Heart left ventricle (tissue), 16 donors: ENCODE measurements at regions of chr15 and their contacts with region 1.

Region 1: DNA sequence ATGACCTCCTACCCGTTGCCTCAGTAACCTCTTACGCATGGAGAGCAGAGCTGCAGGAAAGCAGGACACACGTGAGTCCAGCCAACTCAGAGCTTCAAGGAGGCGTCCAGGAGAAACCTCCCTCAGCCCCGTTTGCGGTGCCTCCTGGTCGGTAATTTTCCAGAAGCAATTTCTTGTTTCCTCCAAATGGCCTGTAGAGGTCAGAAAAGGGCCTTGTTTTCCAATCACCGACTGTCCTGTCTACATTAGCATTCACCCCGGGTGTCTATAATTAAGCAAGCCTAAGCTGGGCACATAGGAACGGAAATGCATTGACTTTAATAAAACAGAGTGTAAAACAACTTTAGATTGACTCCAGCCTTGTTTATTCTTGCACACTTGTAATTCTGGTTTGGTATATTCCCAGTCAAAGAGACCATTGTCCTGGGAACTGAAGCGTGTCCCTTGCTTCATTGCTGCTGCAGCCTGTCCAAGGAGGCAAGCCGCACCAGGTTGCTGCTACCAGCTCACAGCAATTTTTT is 836.2 kb downstream of the AGBL1 start:
- DNase-seq: peak in 2 of 5 donors; percentile 21 to 33
- ATAC-seq: peak; percentile 66 to 81 (median 72)
- H3K4me3 ChIP-seq: no peak overlapping the region
- H3K27ac ChIP-seq: peak overlapping the region in 3 of 12 donors; percentile 68 to 78 (median 69)
- H3K4me1 ChIP-seq: peaks cover 0 to 34% (median 13%) of the 10 kb centered on the region in 12 donors
- H3K27me3 ChIP-seq: no peaks in the 10 kb centered on the region
- CTCF ChIP-seq: peak; percentile 17 to 68 (median 52)
- POLR2A ChIP-seq: no peak

Region 2: GRCh38 chr15:87604857-87605446 is 689.1 kb after region 1 on chr15:
- intact Hi-C with region 1: loop called in 3 of 10 experiments (anchors 5 to 10 kb)
- DNase-seq: no peak
- ATAC-seq: no peak
- H3K4me3 ChIP-seq: no peak overlapping the region
- H3K27ac ChIP-seq: no peak overlapping the region
- H3K4me1 ChIP-seq: peaks cover 0 to 10% (median 1%) of the 10 kb centered on the region in 12 donors
- H3K27me3 ChIP-seq: no peaks in the 10 kb centered on the region
- CTCF ChIP-seq: peak; percentile 20 to 57 (median 42)
- POLR2A ChIP-seq: no peak

Region 3: DNA sequence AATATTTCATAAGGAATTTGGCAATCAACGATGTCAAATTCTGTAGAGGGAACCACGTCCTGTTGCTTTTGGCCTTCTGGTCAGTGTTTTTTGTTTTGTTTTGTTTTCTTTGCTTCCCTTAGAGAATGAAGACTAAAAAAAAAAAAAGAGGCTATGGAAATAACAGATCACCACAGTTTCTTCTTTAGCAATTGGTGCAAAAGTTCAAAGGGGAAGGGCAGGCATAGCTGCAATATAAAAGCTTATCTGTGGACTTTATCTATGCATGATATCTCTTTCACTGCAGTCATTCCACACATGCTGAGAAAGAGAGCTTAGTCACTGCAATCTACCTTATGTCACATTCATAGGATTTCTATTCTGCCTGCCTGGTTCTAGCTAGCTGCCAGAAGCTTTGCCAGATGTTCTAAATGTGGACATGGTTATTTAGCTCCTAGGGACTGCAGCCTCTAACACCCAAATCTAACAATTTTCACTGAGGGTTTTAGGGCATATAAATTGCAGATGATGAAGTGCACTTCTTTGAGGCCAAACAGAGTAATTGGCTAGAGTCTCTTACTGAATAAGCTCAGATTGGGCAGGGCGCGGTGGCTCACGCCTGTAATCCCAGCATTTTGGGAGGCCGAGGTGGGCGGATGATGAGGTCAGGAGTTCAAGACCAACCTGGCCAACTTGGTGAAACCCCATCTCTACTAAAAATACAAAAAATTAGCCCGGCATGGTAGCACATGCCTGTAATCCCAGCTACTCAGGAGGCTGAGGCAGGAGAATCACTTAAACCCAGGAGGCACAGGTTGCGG is 703.5 kb after region 1 on chr15:
- intact Hi-C with region 1: loop called in 1 of 10 experiments (anchors 10 kb)
- DNase-seq: no peak
- ATAC-seq: peak; percentile 68 to 88 (median 86)
- H3K4me3 ChIP-seq: no peak overlapping the region
- H3K27ac ChIP-seq: peak overlapping the region in 6 of 12 donors; percentile 48 to 71 (median 53)
- H3K4me1 ChIP-seq: peaks cover 0 to 18% (median 6%) of the 10 kb centered on the region in 12 donors
- H3K27me3 ChIP-seq: no peaks in the 10 kb centered on the region
- CTCF ChIP-seq: no peak
- POLR2A ChIP-seq: no peak

Region 4: GRCh38 chr15:87752250-87752951 is 836.5 kb after region 1 on chr15:
- intact Hi-C with region 1: loop called in 1 of 10 experiments (anchors 10 kb)
- DNase-seq: no peak
- ATAC-seq: peak in 3 of 4 donors; percentile 45 to 70 (median 67)
- H3K4me3 ChIP-seq: no peak overlapping the region
- H3K27ac ChIP-seq: no peak overlapping the region
- H3K4me1 ChIP-seq: peaks cover 0 to 17% (median 8%) of the 10 kb centered on the region in 12 donors
- H3K27me3 ChIP-seq: no peaks in the 10 kb centered on the region
- CTCF ChIP-seq: no peak
- POLR2A ChIP-seq: no peak